MCF 10A (cell line): ENCODE measurements at regions of chr10 and their contacts with region 1.

Region 1: DNA sequence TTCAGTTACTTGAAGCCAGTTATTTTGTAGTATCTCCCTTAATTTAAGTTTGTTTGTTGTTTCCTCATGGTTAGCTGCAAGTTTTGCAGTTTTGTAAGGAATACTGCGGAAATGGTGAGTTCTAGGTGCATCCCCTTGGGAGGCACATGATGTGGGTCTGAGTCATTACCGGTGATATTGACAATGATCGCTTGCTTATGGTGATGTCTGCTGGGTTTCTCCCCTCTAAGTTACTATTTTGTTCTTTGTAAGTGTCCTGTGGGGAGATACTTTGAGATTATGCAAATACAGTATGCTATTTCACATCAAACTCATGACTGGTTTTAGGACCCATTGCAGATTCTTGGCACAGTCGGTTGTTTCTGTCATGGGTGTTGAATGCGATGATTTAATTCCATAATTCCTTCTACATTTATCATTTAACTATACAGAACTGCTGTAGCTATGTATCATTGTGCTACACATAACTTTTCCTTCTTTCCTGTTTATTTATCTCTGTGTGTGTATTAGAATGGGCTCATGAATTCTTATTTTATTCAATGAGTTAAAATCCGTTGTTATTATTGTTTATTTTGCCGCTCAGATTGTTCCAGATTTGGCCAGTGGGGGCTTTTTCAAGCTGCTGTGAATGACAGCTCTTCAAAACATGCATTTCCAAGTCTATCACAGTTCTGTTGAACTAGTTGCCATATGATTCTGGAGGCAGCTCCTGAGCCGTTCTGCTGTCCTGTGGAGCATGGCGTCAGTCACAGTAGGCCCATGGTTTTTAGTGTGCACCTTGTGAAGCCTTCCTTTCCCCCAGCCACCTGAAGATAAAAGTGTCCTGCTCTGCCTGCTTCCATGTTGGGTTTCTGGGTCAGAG is 18.4 kb downstream of the TSPAN14 start:
- DNase-seq: peak; percentile 93
- H3K4me3 Mint-ChIP-seq: peak overlapping the region; percentile 38
- H3K27ac Mint-ChIP-seq: peak overlapping the region; percentile 99
- H3K4me1 Mint-ChIP-seq: peaks cover 55% of the 10 kb centered on the region
- H3K27me3 Mint-ChIP-seq: no peaks in the 10 kb centered on the region
- CTCF ChIP-seq: no peak

Region 2: GRCh38 chr10:80118674-80119073 is 353.8 kb before region 1 on chr10:
- CTCF ChIA-PET with region 1: no interaction called
- POLR2A ChIA-PET with region 1: no interaction called
- intact Hi-C with region 1: no loop called
- DNase-seq: no peak
- H3K4me3 Mint-ChIP-seq: no peak overlapping the region
- H3K27ac Mint-ChIP-seq: no peak overlapping the region
- H3K4me1 Mint-ChIP-seq: no peaks in the 10 kb centered on the region
- H3K27me3 Mint-ChIP-seq: peaks cover 17% of the 10 kb centered on the region
- CTCF ChIP-seq: no peak

Region 3: DNA sequence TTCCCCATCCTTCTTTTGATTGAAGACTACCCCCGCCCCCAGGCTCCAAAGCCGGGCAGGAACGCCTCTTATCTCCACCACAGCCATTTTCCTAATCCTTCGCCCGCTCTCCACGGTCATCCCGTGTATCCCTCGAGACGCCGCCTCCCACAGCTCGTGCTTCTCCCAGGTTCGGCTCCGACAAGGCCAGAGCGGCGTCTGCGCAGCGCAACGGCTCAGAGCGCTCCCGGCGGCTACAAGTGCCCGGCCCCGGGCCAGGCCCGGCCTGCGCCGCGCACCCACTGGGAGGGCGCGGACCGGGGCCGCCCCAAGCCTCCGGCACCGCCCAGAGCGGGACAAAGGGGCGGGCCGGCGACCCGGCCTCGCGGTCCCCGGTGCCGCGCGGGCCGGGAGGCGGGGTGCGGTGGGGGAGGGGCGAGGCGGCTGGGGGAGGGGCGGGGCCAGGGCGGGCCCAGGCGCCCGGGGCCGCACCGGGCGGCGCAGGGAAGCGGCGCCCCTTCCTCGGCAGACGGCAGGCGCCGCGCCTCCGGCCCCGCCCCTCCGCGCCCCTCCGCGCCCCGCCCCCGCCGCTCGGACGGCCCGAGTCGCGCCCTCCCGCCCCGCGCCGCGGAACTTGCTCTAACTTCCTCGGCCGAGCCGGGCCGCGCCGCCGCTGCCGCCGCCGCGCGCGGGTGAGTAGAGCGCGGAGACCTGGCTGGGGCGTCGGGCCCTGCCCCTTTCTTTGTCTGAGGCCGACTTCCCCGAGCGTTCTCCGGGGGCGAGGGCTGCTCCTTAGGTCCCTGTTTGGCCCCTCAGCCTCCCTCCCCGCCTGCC is 18.6 kb before region 1 on chr10 and contains the start of gene TSPAN14:
- CTCF ChIA-PET with region 1: interaction called, 7 read pairs
- POLR2A ChIA-PET with region 1: interaction called, 174 read pairs
- intact Hi-C with region 1: loop called (anchors 1 kb)
- DNase-seq: peak; percentile 71
- H3K4me3 Mint-ChIP-seq: peak within 1 kb of the TSS; percentile 79
- H3K27ac Mint-ChIP-seq: peak within 1 kb of the TSS; percentile 32
- H3K4me1 Mint-ChIP-seq: peaks cover 20% of the 10 kb centered on the region
- H3K27me3 Mint-ChIP-seq: no peaks in the 10 kb centered on the region
- CTCF ChIP-seq: no peak
- total RNA-seq, gene TSPAN14: 46.9 and 53.7 TPM in 2 replicates

Region 4: GRCh38 chr10:80459047-80459931 is 13.2 kb before region 1 on chr10:
- CTCF ChIA-PET with region 1: interaction called, 7 read pairs
- POLR2A ChIA-PET with region 1: interaction called, 174 read pairs
- intact Hi-C with region 1: loop called (anchors 1 kb)
- DNase-seq: peak; percentile 88
- H3K4me3 Mint-ChIP-seq: peak overlapping the region; percentile 58
- H3K27ac Mint-ChIP-seq: peak overlapping the region; percentile 89
- H3K4me1 Mint-ChIP-seq: peaks cover 65% of the 10 kb centered on the region
- H3K27me3 Mint-ChIP-seq: no peaks in the 10 kb centered on the region
- CTCF ChIP-seq: no peak

Region 5: GRCh38 chr10:80487791-80488538 is 15.5 kb after region 1 on chr10:
- CTCF ChIA-PET with region 1: interaction called, 10 read pairs
- POLR2A ChIA-PET with region 1: interaction called, 48 read pairs
- intact Hi-C with region 1: no loop called
- DNase-seq: no peak
- H3K4me3 Mint-ChIP-seq: no peak overlapping the region
- H3K27ac Mint-ChIP-seq: peak overlapping the region; percentile 90
- H3K4me1 Mint-ChIP-seq: peaks cover 45% of the 10 kb centered on the region
- H3K27me3 Mint-ChIP-seq: no peaks in the 10 kb centered on the region
- CTCF ChIP-seq: no peak

Region 6: DNA sequence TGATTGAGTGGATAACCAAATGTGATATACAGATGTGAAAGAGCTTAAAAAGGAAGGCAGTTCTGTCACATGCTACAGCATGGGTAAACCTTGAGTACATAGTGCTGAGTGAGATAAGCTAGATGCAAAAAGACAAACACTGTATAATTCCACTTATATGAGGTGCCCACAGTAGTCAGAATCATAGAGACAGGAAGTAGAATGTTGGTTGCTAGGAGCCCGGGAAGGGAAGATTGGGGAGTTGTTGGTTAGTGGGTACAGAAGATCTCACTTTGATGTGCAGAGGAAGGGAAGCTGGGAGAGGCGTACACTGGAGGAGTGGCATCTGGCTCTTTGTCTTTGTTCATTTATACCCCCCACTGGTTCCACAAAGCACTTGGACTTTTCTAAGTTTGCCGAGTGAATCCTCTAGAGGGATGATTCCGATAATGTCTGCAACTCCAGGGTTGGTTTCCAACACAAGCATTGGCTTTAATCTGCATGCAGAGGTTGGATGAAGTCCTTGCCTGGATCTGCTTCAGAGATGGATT is 21.1 kb after region 1 on chr10:
- CTCF ChIA-PET with region 1: interaction called, 923 read pairs
- POLR2A ChIA-PET with region 1: interaction called, 205 read pairs
- intact Hi-C with region 1: loop called (anchors 1 kb)
- DNase-seq: no peak
- H3K4me3 Mint-ChIP-seq: no peak overlapping the region
- H3K27ac Mint-ChIP-seq: peak overlapping the region; percentile 1
- H3K4me1 Mint-ChIP-seq: peaks cover 69% of the 10 kb centered on the region
- H3K27me3 Mint-ChIP-seq: no peaks in the 10 kb centered on the region
- CTCF ChIP-seq: no peak

Region 7: GRCh38 chr10:80498833-80499741 is 26.6 kb after region 1 on chr10:
- CTCF ChIA-PET with region 1: interaction called, 923 read pairs
- POLR2A ChIA-PET with region 1: interaction called, 205 read pairs
- intact Hi-C with region 1: loop called (anchors 1 kb)
- DNase-seq: peak; percentile 99
- H3K4me3 Mint-ChIP-seq: peak overlapping the region; percentile 45
- H3K27ac Mint-ChIP-seq: peak overlapping the region; percentile 37
- H3K4me1 Mint-ChIP-seq: peaks cover 83% of the 10 kb centered on the region
- H3K27me3 Mint-ChIP-seq: no peaks in the 10 kb centered on the region
- CTCF ChIP-seq: no peak

Region 8: DNA sequence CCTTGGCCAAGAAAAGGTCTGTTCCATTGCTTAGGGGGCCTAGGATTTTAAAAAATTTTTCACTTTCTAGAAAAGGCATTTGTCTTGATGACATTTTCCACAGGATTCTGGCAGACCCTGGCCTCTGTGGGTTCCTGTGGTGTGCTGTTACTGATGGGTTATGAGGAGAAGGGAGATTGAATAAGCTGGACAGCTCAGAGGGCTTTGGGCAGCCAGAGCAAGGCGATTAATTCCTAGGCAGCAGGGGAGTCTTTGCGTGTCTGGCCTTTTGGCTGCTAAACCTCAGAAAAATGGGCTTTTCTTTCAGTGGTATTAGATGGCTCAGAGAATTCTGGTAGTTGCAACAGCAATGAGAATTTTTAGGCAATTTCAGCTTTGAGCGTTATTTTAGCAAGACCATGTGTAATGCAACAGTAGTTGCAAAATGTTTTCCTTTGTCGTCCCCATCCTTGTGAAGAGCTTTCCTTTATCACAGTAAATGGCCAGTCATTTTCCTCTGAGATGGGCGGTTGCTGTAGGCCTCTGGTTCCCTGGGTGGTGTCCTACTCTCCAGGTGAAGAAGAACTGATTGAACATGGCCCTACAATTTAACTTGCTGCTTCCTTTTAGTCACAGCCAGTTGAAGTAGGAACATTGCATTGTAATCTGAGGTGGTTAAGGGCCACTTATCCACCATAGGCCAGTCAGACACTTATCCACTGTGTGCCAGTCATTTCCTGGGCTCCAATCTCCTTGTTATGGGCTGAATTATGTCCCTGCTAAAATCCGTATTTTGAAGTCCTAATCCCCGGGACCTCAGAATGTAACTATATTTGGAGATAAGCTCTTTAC is 108.4 kb after region 1 on chr10:
- CTCF ChIA-PET with region 1: no interaction called
- POLR2A ChIA-PET with region 1: no interaction called
- intact Hi-C with region 1: no loop called
- DNase-seq: no peak
- H3K4me3 Mint-ChIP-seq: no peak overlapping the region
- H3K27ac Mint-ChIP-seq: no peak overlapping the region
- H3K4me1 Mint-ChIP-seq: no peaks in the 10 kb centered on the region
- H3K27me3 Mint-ChIP-seq: peaks cover 44% of the 10 kb centered on the region
- CTCF ChIP-seq: no peak